CD8-positive, alpha-beta T cell (primary cell): ENCODE measurements at regions of chr12 and their contacts with region 1.

Region 1: DNA sequence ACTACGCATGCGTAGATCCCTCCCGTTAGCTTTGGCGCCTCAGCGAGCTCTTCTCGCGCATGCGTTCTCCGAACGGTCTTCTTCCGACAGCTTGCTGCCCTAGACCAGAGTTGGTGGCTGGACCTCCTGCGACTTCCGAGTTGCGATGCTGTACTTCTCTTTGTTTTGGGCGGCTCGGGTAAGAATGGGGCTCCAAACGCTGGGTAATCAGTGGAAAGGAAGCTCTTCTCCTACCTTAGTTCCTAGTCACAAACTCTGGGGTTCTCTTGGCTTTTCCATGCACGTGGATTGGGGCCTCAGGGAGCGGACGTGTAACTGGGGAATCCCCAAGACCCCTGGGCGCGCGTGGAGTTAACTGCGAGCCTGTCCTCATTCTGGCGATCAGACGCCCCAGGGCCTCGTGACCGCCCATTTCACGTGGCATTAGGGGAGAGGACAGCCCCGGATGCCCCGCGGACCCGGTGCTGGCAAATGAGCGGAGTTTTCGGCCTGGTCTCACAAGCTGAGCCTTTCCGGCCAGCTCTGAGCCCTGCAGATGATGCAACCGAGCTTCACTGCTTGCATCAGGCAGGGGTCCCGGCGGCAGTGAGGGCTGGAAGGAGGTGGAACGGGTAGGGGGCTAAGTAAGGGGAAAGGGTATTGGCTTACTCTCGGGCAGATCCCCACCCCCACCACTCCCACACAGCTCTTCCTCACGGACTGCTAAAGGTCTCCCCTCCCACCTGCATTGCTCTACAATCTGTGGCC is at the start of gene SHMT2:
- DNase-seq: peak; percentile 74 to 96 (median 91)
- ATAC-seq: peak; percentile 56
- H3K4me3 ChIP-seq: peak within 1 kb of the TSS; percentile 63 to 72
- H3K4me3 Mint-ChIP-seq: peak within 1 kb of the TSS; percentile 92
- H3K27ac ChIP-seq: peak within 1 kb of the TSS; percentile 20 to 62
- H3K27ac Mint-ChIP-seq: peak within 1 kb of the TSS; percentile 67
- H3K4me1 ChIP-seq: peaks cover 53% of the 10 kb centered on the region
- H3K4me1 Mint-ChIP-seq: peaks cover 48% of the 10 kb centered on the region
- H3K27me3 ChIP-seq: peaks cover 15 to 19% of the 10 kb centered on the region in 2 experiments
- H3K27me3 Mint-ChIP-seq: peaks cover 23% of the 10 kb centered on the region
- CTCF ChIP-seq: no peak
- total RNA-seq, gene SHMT2: 14.2 to 18.6 TPM

Region 2: DNA sequence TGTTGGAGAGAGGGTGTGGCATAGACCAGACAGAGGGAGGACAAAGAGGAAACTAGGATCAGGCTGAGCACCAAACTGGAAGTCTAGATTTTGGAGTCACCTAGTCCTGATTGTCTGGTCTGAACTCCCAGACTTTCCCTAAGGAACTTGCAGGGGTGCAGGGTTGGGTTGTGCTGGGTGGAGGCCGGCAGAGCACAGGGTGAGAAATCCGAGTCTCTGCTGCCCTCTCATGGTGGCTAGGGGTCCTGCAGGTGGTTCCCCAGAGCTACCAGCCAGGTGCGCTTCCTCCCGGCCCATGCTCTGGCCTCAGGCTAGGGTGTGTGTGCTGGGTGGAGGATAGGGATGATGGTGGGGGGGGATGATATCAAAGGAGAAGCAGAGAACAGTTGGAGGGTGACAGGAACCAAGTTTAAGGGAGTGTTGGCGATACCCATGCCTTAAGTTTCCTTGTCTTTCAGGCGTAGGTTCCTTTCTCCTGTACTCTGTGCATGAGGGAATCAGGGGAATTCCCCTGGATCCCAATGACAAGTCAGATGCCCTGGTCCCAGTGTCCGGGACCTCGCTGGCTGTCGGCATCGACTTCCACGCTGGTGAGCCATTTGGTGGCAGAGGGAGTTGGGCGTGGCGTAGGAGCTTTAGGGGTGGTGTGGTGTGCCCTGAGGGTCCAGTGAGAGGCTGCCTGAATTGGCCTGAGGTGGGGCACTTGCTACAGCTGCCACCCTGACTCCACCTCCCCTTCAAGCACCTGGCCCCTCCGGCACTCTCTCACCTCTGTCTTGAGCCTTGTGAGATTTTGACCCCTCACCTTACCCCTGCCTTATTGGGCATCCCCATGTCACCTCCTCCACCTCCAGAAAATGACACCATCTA is 46.7 kb before region 1 on chr12:
- CTCF ChIA-PET with region 1: no interaction called
- POLR2A ChIA-PET with region 1: no interaction called
- intact Hi-C with region 1: no loop called
- DNase-seq: peak; percentile 63 to 88 (median 82)
- ATAC-seq: peak; percentile 100
- H3K4me3 ChIP-seq: no peak overlapping the region
- H3K4me3 Mint-ChIP-seq: no peak overlapping the region
- H3K27ac ChIP-seq: no peak overlapping the region
- H3K27ac Mint-ChIP-seq: no peak overlapping the region
- H3K4me1 ChIP-seq: peaks cover 5% of the 10 kb centered on the region
- H3K4me1 Mint-ChIP-seq: peaks cover 2% of the 10 kb centered on the region
- H3K27me3 ChIP-seq: no peaks in the 10 kb centered on the region
- H3K27me3 Mint-ChIP-seq: no peaks in the 10 kb centered on the region
- CTCF ChIP-seq: peak; percentile 83

Region 3: GRCh38 chr12:57213058-57213715 is 16.6 kb before region 1 on chr12:
- CTCF ChIA-PET with region 1: interaction called, 102 read pairs
- POLR2A ChIA-PET with region 1: interaction called, 10 read pairs
- intact Hi-C with region 1: loop called in 1 of 2 experiments (anchors 1 kb)
- DNase-seq: peak; percentile 70 to 90 (median 84)
- ATAC-seq: peak; percentile 66
- H3K4me3 ChIP-seq: no peak overlapping the region
- H3K4me3 Mint-ChIP-seq: peak overlapping the region; percentile 8
- H3K27ac ChIP-seq: no peak overlapping the region
- H3K27ac Mint-ChIP-seq: no peak overlapping the region
- H3K4me1 ChIP-seq: peaks cover 43% of the 10 kb centered on the region
- H3K4me1 Mint-ChIP-seq: peaks cover 34% of the 10 kb centered on the region
- H3K27me3 ChIP-seq: peaks cover 37 to 42% of the 10 kb centered on the region in 2 experiments
- H3K27me3 Mint-ChIP-seq: peaks cover 39% of the 10 kb centered on the region
- CTCF ChIP-seq: peak; percentile 97